ENCODE measurements at regions of chr17 and their contacts with region 1.

Region 1: DNA sequence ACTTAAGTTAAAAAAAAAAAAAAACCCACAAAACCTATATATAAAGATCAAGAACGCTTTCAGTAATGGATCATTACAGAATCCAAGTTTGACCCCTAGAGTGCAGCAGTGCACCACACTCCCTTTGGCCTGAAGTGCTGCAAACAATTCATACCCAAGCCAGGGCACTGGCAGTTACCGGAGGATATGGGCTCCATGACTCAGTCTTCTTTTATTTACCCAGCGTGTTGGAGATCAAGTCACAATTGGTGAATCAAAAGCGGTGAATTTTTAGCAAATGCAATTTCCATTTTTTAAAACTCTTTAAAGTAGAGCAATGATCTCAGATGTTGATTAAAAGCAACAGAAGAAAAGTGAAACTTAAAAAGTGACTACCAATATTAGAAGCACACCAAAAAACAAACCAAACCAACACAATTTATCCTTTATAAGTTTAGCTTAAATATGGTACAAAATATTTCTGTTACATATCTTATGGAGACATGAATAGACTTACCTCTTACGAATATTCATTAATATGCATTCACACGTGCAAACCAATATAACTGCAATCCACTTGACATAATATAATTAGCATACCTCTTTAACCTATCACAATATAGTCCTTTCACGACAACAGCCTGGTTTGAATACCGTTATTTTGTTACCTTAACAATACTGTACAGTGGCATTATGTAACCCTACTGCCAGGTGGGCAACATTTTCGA is 46.3 kb downstream of the ZNF652 start:
- DNase-seq: peak; percentile 66 to 89 (median 72)
- ATAC-seq: peak; percentile 99
- H3K4me3 ChIP-seq: no peak overlapping the region
- H3K4me3 Mint-ChIP-seq: peak overlapping the region; percentile 82
- H3K27ac ChIP-seq: no peak overlapping the region
- H3K27ac Mint-ChIP-seq: peak overlapping the region; percentile 40
- H3K4me1 ChIP-seq: peaks cover 3% of the 10 kb centered on the region
- H3K4me1 Mint-ChIP-seq: peaks cover 30% of the 10 kb centered on the region
- H3K27me3 ChIP-seq: no peaks in the 10 kb centered on the region
- H3K27me3 Mint-ChIP-seq: no peaks in the 10 kb centered on the region
- CTCF ChIP-seq: peak; percentile 85

Region 2: DNA sequence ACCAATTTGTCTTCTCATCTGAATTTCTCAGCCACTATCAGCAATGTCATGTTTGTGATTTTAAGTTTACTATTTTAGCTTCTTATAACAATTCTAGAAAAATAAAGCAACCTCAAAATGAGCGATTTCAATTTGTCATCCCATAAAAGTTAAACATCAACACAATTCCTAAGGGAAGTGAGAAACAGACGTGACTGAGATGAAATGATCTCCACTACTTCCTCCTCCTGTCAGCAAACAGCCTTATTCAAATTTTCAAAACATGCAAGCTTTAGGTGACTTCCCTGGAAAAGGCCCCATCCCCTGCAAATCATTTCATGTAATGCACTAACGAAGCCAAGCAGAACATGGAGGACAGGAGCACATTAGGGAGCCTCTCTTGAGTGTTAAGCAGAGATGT is 18.6 kb before region 1 on chr17:
- CTCF ChIA-PET with region 1: no interaction called
- POLR2A ChIA-PET with region 1: no interaction called
- intact Hi-C with region 1: no loop called
- DNase-seq: no peak
- ATAC-seq: no peak
- H3K4me3 ChIP-seq: no peak overlapping the region
- H3K4me3 Mint-ChIP-seq: no peak overlapping the region
- H3K27ac ChIP-seq: no peak overlapping the region
- H3K27ac Mint-ChIP-seq: no peak overlapping the region
- H3K4me1 ChIP-seq: no peaks in the 10 kb centered on the region
- H3K4me1 Mint-ChIP-seq: no peaks in the 10 kb centered on the region
- H3K27me3 ChIP-seq: no peaks in the 10 kb centered on the region
- H3K27me3 Mint-ChIP-seq: no peaks in the 10 kb centered on the region
- CTCF ChIP-seq: no peak

Region 3: GRCh38 chr17:49337884-49338283 is 22.2 kb after region 1 on chr17:
- CTCF ChIA-PET with region 1: interaction called, 9 read pairs
- POLR2A ChIA-PET with region 1: interaction called, 5 read pairs
- intact Hi-C with region 1: loop called in 1 of 2 experiments (anchors 2 kb)
- DNase-seq: peak in 1 of 14 experiments; percentile 51
- ATAC-seq: no peak
- H3K4me3 ChIP-seq: no peak overlapping the region
- H3K4me3 Mint-ChIP-seq: no peak overlapping the region
- H3K27ac ChIP-seq: no peak overlapping the region
- H3K27ac Mint-ChIP-seq: peak overlapping the region; percentile 15
- H3K4me1 ChIP-seq: peaks cover 52% of the 10 kb centered on the region
- H3K4me1 Mint-ChIP-seq: peaks cover 71% of the 10 kb centered on the region
- H3K27me3 ChIP-seq: no peaks in the 10 kb centered on the region
- H3K27me3 Mint-ChIP-seq: no peaks in the 10 kb centered on the region
- CTCF ChIP-seq: no peak

Region 4: DNA sequence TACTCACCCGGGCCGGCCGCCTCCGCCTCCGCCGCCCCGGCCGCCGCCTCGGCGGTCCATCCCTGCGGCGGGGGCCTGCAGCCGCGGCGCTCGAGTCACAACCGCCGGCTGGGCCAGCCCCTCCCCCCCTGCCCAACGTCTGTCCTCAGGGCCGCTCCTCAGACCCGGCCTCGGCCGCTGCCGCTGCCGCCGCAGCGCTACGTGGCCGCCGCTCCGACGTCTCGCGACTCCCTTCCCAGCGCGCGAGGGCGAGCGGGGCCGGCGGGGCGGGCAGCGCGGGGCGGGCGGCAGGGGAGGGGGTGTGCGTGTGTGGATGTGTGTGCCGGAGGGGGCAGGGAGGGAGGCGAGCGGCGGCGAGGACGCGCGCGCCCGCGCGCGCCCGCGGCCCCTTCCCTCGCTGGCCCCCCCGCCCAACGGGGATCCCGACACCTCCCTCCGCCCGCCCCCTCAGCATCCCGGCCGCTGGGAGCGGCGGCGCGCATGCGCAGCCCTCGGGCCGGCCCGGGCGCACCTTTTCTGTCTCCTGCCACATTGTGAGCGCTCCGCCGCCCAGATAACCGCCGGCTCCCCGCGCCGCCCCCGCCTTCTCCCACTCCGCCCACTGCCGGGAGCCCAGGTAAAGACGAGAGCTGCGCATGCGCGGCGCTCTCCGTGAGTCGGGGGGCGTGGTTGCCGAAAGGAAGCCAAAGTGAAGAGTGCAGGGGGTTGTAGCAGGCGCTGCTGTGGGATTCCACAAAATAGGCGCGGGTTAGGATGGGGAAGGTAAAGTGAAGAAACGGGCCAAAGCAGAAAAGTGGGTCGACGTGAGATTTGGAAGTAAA is 46.4 kb after region 1 on chr17 and contains the start of gene ZNF652:
- CTCF ChIA-PET with region 1: interaction called, 49 read pairs
- POLR2A ChIA-PET with region 1: interaction called, 39 read pairs
- intact Hi-C with region 1: loop called in 1 of 2 experiments (anchors 2 kb)
- DNase-seq: peak; percentile 94 to 98 (median 97)
- ATAC-seq: peak; percentile 59
- H3K4me3 ChIP-seq: peak within 1 kb of the TSS; percentile 86
- H3K4me3 Mint-ChIP-seq: peak within 1 kb of the TSS; percentile 96
- H3K27ac ChIP-seq: peak within 1 kb of the TSS; percentile 61 to 87
- H3K27ac Mint-ChIP-seq: peak within 1 kb of the TSS; percentile 97
- H3K4me1 ChIP-seq: peaks cover 38% of the 10 kb centered on the region
- H3K4me1 Mint-ChIP-seq: peaks cover 56% of the 10 kb centered on the region
- H3K27me3 ChIP-seq: no peaks in the 10 kb centered on the region
- H3K27me3 Mint-ChIP-seq: no peaks in the 10 kb centered on the region
- CTCF ChIP-seq: no peak
- total RNA-seq, gene ZNF652: 33.7 to 34.9 TPM

Region 5: DNA sequence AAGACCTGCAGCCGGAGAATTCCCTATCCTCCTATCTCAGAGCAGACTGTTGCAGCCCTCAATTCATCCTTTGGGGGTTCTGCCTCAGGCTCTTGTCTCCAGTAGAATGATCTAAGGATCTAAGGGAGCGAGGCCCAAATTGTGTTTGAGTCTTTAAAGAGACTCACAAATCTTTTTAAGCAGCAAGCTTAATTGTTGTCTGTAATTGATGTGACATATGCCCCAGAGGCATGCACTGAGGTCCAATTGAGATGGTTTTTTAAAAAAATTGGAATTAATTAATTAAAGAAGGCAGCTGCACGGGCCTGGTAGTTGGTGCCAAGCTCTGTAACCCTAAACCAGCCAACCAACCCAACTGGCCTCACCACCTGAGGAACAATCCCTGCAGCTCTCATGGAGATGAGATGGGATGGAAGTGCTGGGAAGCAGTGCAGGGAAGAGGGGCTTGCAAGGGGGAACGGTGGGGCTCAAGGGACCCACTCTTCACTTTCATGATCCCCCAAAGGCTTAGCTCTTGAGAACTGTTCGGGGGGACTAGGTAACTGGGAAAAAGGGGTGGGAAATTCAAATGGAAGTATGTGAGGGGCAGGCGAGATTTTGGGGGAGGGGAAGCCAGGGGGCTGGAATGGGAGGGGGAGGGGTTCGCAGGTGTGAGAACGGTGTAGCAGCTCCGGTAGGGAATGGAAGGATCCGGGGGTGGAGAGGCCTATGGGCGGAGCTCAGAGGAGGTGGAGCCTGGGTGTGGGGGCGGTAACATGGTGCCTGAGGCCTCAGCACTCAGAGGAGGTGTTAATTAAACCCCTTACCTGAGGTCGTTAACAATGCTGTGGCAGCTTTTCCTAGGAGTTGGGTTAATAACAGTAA is 55.5 kb after region 1 on chr17:
- CTCF ChIA-PET with region 1: interaction called, 49 read pairs
- POLR2A ChIA-PET with region 1: interaction called, 6 read pairs
- intact Hi-C with region 1: loop called (anchors 1 kb)
- DNase-seq: no peak
- ATAC-seq: no peak
- H3K4me3 ChIP-seq: no peak overlapping the region
- H3K4me3 Mint-ChIP-seq: no peak overlapping the region
- H3K27ac ChIP-seq: no peak overlapping the region
- H3K27ac Mint-ChIP-seq: no peak overlapping the region
- H3K4me1 ChIP-seq: peaks cover 6% of the 10 kb centered on the region
- H3K4me1 Mint-ChIP-seq: peaks cover 4% of the 10 kb centered on the region
- H3K27me3 ChIP-seq: no peaks in the 10 kb centered on the region
- H3K27me3 Mint-ChIP-seq: no peaks in the 10 kb centered on the region
- CTCF ChIP-seq: no peak

Region 6: DNA sequence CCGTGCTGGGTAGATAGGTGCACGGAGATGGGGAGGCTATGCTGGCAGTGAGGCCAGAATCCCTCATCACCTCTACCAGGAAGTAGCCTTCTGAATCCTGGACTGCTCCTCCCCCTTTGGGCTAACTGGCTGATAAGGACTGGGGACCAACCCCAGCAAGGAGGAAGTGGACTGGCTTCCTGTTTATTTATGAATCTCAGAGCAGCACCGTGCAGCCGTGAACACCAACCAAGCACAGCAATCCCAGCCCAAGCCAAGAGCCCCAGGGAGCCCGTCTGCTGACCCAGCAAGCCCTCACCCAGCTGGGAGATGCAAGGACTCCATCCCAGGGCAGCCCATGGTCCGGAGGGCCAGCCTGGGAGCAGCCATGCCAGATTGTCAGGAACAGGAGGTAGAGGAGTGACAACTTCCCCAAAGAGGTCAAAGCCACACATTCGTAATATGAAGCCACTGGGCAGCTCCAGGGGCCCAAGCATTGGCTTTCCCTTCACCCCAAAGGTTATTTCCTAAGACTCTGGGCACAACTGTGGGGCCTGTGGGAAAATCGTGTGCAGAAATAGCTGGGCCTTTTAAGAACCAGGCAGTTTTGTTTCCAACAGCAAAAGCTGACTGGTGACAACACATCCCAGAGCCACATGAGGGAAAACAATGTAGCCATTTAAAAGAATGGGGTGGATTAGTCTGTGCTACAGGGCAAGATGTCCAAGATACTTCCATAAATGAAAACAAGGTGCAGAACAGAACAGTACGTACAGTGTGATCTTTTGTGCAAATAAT is 75.0 kb after region 1 on chr17:
- CTCF ChIA-PET with region 1: interaction called, 23 read pairs
- POLR2A ChIA-PET with region 1: interaction called, 3 read pairs
- intact Hi-C with region 1: loop called (anchors 1 kb)
- DNase-seq: peak in 5 of 14 experiments; percentile 9 to 56 (median 46)
- ATAC-seq: no peak
- H3K4me3 ChIP-seq: peak overlapping the region; percentile 24
- H3K4me3 Mint-ChIP-seq: no peak overlapping the region
- H3K27ac ChIP-seq: peak overlapping the region in 1 of 2 donors; percentile 70
- H3K27ac Mint-ChIP-seq: peak overlapping the region; percentile 64
- H3K4me1 ChIP-seq: peaks cover 70% of the 10 kb centered on the region
- H3K4me1 Mint-ChIP-seq: peaks cover 61% of the 10 kb centered on the region
- H3K27me3 ChIP-seq: no peaks in the 10 kb centered on the region
- H3K27me3 Mint-ChIP-seq: no peaks in the 10 kb centered on the region
- CTCF ChIP-seq: no peak

Region 7: GRCh38 chr17:49407981-49408501 is 92.3 kb after region 1 on chr17:
- CTCF ChIA-PET with region 1: interaction called, 11 read pairs
- POLR2A ChIA-PET with region 1: no interaction called
- intact Hi-C with region 1: no loop called
- DNase-seq: peak; percentile 71 to 89 (median 81)
- ATAC-seq: peak; percentile 100
- H3K4me3 ChIP-seq: no peak overlapping the region
- H3K4me3 Mint-ChIP-seq: peak overlapping the region; percentile 61
- H3K27ac ChIP-seq: no peak overlapping the region
- H3K27ac Mint-ChIP-seq: no peak overlapping the region
- H3K4me1 ChIP-seq: peaks cover 18% of the 10 kb centered on the region
- H3K4me1 Mint-ChIP-seq: peaks cover 22% of the 10 kb centered on the region
- H3K27me3 ChIP-seq: no peaks in the 10 kb centered on the region
- H3K27me3 Mint-ChIP-seq: no peaks in the 10 kb centered on the region
- CTCF ChIP-seq: peak; percentile 95

Region 8: DNA sequence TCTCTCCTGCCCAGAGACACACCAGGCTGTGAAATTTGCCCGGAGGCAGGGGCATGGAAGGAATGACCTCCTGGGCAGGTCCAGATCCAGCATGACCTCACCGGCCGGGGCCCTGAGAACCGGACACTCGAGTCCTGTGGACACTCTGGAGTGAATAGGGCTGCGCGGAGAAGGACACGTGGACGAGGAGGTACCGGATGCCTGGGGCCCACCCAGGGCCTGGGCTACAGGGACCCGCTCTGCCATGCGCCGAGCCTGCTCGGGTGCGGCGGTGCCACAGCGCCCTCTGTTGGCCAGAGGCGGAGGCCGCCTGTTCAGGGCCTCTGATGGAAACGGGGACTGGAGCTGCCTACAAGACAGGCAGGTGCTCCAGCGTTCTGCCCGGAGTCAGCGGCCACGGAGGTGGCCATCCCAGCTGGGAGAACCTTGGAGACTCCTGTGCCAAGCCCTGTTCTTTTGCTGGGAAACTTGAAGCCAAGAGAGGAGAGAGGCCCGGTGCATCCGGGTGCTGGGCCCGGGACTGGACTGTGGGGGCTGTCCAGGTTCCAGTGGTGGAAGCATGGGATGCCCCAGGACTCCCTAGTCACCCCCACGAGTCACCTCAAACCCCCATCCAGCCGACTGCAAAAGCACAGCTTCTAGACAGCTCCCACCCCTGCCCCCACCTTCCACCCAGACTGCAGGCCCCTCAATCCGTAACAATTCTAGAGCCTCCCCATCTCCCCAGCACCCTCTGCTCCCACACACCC is 240.7 kb after region 1 on chr17:
- CTCF ChIA-PET with region 1: no interaction called
- POLR2A ChIA-PET with region 1: no interaction called
- intact Hi-C with region 1: loop called in 1 of 2 experiments (anchors 10 kb)
- DNase-seq: peak; percentile 63 to 88 (median 77)
- ATAC-seq: peak; percentile 96
- H3K4me3 ChIP-seq: no peak overlapping the region
- H3K4me3 Mint-ChIP-seq: no peak overlapping the region
- H3K27ac ChIP-seq: no peak overlapping the region
- H3K27ac Mint-ChIP-seq: no peak overlapping the region
- H3K4me1 ChIP-seq: peaks cover 12% of the 10 kb centered on the region
- H3K4me1 Mint-ChIP-seq: peaks cover 6% of the 10 kb centered on the region
- H3K27me3 ChIP-seq: no peaks in the 10 kb centered on the region
- H3K27me3 Mint-ChIP-seq: peaks cover 9% of the 10 kb centered on the region
- CTCF ChIP-seq: peak; percentile 97

Region 9: DNA sequence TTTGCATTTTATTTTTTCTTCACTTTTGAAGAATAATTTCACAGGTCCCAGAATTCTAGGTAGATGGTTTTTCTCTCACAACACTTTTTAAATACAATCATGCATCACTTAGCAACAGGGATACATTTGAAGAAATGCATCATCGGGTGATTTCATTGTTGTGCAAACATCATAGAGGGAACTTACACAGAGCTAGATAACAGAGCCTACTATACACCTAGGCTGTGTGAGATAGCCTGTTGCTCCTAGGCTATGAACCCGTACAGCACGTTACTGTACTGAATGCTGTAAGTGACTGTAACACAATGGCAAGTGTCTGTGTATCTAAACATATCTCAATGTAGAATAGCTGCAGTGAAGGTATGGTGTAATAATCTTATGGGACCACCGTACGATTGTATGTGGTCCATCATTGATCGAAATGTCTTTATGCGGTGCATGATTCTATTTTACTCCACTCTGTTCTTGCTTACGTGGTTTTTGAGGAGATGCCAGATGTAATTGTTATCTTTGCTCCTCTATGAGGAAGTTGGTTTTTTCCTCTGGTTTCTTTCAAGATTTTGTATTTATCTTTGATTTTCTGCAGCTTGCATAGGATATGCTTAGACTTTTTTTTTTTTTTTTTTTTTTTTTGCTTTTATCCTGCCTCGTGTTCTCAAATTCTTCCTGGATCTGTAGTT is 923.0 kb after region 1 on chr17:
- CTCF ChIA-PET with region 1: no interaction called
- POLR2A ChIA-PET with region 1: no interaction called
- intact Hi-C with region 1: no loop called
- DNase-seq: no peak
- ATAC-seq: no peak
- H3K4me3 ChIP-seq: no peak overlapping the region
- H3K4me3 Mint-ChIP-seq: no peak overlapping the region
- H3K27ac ChIP-seq: no peak overlapping the region
- H3K27ac Mint-ChIP-seq: no peak overlapping the region
- H3K4me1 ChIP-seq: no peaks in the 10 kb centered on the region
- H3K4me1 Mint-ChIP-seq: no peaks in the 10 kb centered on the region
- H3K27me3 ChIP-seq: peaks cover 8 to 11% of the 10 kb centered on the region in 2 experiments
- H3K27me3 Mint-ChIP-seq: peaks cover 46% of the 10 kb centered on the region
- CTCF ChIP-seq: no peak